Posterior cingulate gyrus (tissue), 11 donors: ENCODE measurements at regions of chr1 and their contacts with region 1.

Region 1: DNA sequence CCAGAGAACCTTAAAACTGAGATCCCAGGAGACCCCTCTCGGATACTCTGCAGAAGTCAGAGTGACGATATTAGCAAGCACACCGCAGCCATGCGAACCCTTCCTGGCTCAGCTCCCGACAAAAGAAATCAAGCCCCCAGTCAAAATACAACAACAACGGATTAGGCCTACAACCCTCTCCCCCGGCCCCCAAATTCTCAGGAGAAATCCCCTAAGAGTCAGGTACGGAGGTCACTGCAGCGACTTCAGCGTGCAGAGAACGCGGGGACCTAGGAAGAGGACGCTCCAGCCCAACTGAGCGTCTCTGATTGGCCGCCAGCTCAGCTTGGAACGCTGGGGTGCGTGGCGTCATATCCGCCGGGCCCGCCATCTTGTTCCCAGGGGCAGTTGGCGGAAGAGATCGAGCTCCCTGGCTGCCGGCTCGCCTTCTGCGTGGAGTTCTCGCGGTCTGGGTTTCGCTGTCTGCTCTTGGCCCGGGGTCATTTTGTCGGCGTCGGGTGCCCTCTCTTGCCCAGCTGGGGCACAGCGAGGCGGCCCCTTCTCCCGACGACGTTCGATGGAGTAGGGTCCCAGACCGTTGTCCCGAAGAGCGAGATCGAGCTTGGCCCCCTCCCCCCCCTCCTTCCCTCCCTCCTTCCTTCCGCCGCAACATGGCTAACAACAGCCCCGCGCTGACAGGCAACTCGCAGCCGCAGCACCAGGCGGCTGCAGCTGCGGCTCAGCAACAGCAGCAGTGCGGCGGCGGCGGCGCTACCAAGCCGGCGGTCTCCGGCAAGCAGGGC is at the start of gene PRPF38B:
- DNase-seq: peak; percentile 94 to 99 (median 96)

Region 2: DNA sequence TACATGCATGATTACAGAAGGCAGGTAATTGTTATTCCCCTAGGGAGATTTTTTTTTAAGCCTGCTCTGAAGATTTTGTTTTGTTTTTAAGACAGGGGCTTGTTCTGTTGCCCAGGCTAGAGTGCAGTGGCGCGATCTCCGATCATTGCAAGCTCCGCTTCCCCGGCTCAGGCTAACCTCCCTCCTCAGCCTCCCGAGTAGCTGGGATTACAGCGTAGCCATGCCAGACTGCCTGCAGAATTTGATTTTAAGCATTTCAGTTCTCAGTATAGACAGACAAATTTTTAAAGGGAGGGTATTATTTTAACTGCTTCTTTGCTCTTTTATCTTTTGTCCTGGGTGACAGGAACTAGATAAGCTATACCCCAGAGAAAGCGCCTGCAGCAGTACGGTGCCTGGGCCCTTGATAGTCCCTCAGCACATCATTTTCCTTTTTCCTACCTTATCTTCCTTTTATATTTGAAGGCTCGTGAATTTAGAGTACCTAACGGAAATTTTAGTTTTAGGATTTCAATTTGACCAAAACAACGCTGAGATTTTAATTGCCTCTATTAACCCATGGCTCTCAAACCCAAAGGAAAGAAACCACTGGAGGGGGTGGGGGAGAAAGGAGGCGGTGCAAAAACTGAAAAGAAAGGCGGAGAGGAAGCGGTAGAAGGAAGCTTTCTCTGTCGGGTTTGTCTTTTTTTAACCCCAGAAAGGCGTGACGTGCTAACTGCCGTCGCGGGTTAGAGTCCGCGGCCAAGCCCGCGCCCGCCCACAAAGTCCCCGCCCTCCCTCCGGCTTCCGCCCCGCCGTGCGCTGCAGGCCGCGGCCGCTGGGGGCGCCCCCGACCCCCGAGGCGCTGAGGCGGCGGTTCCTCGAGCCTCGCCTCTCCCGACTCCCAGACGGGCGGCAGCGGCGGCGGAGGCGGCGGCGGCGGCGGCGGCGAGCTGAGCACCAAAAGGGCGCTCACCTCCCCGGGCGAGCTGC is 132.6 kb before region 1 on chr1 and contains the start of gene EEIG2:
- intact Hi-C with region 1: no loop called
- DNase-seq: peak; percentile 69 to 97 (median 77)

Region 3: GRCh38 chr1:108643492-108644335 is 48.4 kb before region 1 on chr1:
- intact Hi-C with region 1: no loop called
- DNase-seq: peak in 2 of 10 donors; percentile 27 to 36

Region 4: GRCh38 chr1:108661030-108661620 is 31.0 kb before region 1 on chr1 and contains the start of gene HENMT1:
- intact Hi-C with region 1: loop called (anchors 2 kb)
- DNase-seq: peak; percentile 33 to 94 (median 56)

Region 5: DNA sequence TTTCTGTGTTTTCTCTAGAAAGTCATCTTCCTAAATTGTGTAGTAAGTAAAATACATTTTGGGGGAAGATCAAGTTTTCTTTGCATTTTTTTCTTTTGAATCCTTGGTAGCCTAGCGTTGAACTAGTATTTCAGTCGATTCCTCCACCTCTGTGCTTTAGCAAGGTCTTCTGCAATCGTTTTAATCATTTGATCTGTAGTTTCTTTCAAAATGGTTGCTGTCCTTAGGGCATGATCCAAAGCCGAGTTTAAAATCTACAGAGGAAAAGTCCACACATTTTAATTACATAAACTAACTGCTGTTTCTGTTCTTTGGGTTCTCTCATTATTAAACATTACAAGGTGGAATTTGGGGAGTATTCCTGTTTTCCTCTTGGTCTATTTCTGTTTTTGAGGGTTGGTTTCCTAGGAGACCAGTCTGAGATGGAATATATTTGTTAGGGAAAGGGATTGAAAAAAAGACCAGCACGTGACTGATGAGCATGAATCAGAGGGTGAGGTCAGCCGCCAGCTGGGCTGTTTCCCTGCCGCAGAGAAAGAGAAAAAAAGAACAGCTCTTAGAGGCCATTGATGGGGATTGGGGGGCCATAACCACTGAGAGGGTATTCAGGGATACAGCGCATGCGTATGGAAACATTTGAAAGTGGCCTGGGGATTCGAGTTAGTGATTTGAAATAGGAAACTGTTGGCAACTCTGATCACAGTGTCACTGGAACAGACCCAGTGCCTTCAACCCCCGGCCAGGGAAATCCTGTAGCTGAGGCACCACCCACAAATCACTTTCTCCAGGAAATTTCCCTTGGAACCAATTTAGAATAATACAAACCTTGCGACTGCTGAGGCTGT is 124.1 kb after region 1 on chr1:
- intact Hi-C with region 1: loop called (anchors 10 kb)
- DNase-seq: peak; percentile 63 to 96 (median 78)

Region 6: DNA sequence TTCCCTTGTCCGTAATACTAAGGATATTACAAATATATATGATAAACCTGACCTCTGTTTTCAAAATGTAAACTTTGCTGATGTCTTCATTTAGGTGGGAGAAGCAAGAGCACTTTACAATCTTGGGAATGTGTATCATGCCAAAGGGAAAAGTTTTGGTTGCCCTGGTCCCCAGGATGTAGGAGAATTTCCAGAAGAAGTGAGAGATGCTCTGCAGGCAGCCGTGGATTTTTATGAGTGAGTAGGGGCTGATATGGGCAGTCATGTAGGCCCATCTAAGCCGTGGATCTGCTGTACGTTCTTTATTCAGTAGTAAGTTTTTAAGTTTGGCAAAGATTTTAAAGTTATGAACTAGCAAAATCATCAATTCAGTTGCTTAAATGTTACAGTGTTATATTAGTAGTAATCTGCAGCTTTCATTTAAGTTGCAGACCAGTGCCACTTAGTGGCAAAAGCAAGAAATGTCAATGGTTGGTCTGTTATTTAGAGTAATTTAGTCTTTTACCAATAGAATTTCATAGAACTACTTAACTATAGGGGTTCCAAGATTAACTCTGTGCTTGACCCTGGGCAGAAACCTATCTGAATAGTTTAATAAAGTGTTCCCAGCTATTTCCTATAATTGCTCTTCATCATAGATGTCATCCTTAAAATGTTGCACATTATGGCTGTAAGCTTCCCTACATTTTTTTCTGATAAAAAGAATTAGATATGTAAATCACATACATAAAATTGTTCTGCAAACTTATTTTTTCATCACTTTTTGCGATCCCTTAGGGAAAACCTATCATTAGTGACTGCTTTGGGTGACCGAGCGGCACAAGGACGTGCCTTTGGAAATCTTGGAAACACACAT is 206.0 kb after region 1 on chr1:
- intact Hi-C with region 1: loop called (anchors 2 kb)
- DNase-seq: peak in 1 of 10 donors; percentile 42